Mammary epithelial cell (primary cell): ENCODE measurements at regions of chr6 and their contacts with region 1.

Region 1: DNA sequence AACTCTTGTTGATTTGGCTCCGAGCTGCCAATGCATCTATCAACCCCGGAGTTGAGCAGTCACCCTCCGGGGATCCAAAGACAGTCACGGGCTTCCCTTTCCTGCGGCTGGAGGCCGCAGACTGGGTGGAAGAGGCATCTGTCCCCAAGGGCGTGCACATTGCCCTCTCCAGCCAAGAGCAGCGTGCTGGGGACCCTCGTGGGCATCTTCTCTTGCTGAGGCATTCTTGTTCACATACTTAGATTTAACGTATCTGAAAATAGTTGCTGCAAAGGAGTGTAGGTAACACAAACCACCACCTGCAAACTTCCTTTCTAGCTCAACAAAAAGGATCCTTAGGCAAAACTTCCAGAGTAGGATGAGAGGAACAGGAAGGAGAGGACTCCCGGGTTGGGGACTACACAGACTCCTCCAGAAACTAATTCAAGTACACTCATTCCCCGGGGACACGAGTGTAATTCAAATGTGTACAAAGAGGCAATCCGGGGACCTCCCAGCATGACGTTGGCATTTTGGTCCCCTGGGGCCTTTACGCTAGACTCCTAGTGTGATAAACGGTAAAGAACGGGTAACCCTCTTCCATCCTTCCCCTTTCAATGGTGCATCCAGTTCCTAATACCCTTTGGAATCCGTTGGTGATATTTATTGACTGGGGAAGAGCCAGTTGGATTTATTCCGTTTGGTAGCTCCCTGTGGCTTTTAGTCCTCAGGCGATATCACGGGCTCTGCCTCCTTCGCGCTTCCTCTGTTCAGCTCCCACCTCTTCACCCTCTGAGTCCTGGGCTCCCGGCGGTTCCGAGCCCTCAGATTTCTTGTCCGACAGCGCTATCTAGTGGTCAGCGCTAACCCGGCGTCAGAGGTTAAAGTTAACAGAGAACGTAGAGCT is 2.7 kb upstream of the COL12A1 start:
- DNase-seq: peak; percentile 71
- H3K4me3 ChIP-seq: no peak overlapping the region
- H3K27ac ChIP-seq: no peak overlapping the region
- H3K4me1 ChIP-seq: peaks cover 9% of the 10 kb centered on the region
- H3K27me3 ChIP-seq: no peaks in the 10 kb centered on the region
- CTCF ChIP-seq: peak; percentile 86 to 90

Region 2: DNA sequence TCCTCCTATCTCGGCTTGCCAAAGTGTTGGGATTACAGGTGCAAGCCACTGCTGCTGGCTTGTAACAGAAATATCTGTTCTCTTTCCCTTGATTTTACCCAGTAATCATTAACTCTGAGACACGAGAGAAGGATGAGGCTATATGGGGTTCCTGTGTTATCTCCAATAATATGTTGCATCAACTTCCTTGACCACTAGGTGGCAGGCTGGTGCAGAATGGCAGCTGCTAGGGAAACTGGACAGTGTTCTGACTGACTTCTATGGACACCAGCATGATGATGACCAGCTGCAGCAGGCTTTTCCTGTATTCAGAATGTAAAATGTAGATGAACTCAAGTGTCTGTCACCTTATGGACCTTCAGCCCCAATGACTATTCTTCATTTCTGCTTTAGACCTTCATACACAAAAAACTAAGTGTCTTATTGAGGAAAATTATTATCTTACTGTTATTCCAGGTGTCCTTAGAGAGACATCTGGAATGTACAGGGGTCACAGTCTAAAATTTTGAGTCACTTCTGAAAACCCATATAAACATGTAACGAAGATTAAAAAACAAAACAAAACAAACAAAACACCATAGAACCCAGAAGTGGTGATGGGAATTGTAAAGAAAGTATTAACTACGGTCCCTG is 1533.0 kb before region 1 on chr6:
- CTCF ChIA-PET with region 1: no interaction called
- dilution Hi-C with region 1: no loop called
- in situ Hi-C with region 1: no loop called
- intact Hi-C with region 1: loop called (anchors 5 kb)
- DNase-seq: peak; percentile 72
- H3K4me3 ChIP-seq: no peak overlapping the region
- H3K27ac ChIP-seq: no peak overlapping the region
- H3K4me1 ChIP-seq: peaks cover 10% of the 10 kb centered on the region
- H3K27me3 ChIP-seq: no peaks in the 10 kb centered on the region
- CTCF ChIP-seq: peak; percentile 92 to 95

Region 3: DNA sequence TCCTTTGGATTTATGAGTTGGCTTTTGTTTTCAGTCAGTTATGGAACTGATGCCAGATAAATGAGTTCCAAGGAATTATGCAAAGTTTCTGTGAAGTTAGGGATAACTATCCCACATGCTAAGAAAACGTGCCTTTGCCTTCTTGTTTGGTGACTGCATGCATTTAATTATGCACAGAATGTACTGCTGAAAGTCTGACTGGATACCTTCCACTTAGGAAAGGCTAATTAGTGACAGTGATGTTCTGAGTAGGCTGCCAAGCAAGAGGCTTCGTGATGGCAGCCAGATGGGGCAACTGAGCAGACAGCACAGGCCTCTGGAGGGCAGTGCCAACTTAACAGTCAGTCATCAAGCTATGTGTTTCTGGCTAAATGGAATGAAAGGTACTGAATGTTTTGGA is 1222.7 kb before region 1 on chr6:
- CTCF ChIA-PET with region 1: interaction called, 23 read pairs
- dilution Hi-C with region 1: no loop called
- in situ Hi-C with region 1: loop called in 1 of 2 experiments (anchors 25 kb)
- intact Hi-C with region 1: loop called (anchors 1 kb)
- DNase-seq: peak; percentile 45
- H3K4me3 ChIP-seq: no peak overlapping the region
- H3K27ac ChIP-seq: no peak overlapping the region
- H3K4me1 ChIP-seq: no peaks in the 10 kb centered on the region
- H3K27me3 ChIP-seq: peaks cover 2% of the 10 kb centered on the region
- CTCF ChIP-seq: peak; percentile 58 to 91

Region 4: GRCh38 chr6:74574794-74575193 is 633.7 kb before region 1 on chr6:
- CTCF ChIA-PET with region 1: interaction called, 10 read pairs
- dilution Hi-C with region 1: no loop called
- in situ Hi-C with region 1: no loop called
- intact Hi-C with region 1: no loop called
- DNase-seq: no peak
- H3K4me3 ChIP-seq: no peak overlapping the region
- H3K27ac ChIP-seq: no peak overlapping the region
- H3K4me1 ChIP-seq: no peaks in the 10 kb centered on the region
- H3K27me3 ChIP-seq: no peaks in the 10 kb centered on the region
- CTCF ChIP-seq: peak; percentile 29 to 34

Region 5: DNA sequence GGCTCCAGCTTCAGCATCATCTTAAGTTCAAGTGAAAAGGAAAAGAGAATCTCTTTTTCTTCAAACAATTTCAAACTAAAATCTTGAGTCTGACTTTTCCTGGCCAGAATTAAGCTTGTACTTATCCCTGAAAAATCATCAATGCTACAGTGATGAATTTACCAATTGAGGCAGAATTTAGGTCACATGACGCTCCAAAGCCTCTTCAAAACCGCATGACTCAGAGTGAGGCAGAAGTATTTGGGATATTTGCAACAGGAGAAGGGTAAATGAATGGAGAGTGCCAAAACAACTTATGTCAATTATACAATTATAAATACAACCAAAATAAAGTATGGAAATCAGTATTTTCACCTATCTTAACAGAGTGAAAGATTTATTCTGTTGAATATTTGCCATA is 518.2 kb before region 1 on chr6:
- CTCF ChIA-PET with region 1: no interaction called
- dilution Hi-C with region 1: no loop called
- in situ Hi-C with region 1: no loop called
- intact Hi-C with region 1: no loop called
- DNase-seq: no peak
- H3K4me3 ChIP-seq: no peak overlapping the region
- H3K27ac ChIP-seq: no peak overlapping the region
- H3K4me1 ChIP-seq: no peaks in the 10 kb centered on the region
- H3K27me3 ChIP-seq: peaks cover 3% of the 10 kb centered on the region
- CTCF ChIP-seq: no peak

Region 6: DNA sequence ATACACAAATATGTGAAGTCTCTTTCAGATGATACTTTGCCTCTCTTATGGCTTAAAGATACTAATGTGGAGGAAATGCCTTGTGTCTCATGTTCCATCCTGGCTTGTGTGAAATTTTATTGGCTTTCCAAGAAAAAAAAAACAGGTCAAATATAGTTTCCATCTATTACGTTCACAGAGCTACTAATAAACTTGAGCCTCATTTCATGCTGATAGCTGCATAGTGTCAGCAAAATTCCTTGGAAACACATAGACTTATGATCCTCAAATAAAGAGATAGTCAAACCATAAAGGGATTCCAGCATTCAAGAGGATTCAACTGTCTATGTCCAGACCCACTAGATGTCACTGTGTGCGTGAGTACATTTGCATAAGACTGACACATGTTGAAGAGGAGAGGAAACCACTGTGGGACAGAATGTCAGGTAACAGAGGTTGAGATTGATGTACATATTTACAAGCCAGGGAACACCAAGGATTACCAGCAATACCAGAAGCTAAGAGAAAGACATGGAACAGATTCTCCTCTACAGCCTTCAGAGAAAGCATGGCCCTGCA is 269.3 kb before region 1 on chr6:
- CTCF ChIA-PET with region 1: interaction called, 3 read pairs
- dilution Hi-C with region 1: no loop called
- in situ Hi-C with region 1: no loop called
- intact Hi-C with region 1: loop called (anchors 1 kb)
- DNase-seq: peak; percentile 39
- H3K4me3 ChIP-seq: no peak overlapping the region
- H3K27ac ChIP-seq: no peak overlapping the region
- H3K4me1 ChIP-seq: peaks cover 18% of the 10 kb centered on the region
- H3K27me3 ChIP-seq: no peaks in the 10 kb centered on the region
- CTCF ChIP-seq: peak in 1 of 2 donors; percentile 41

Region 7: DNA sequence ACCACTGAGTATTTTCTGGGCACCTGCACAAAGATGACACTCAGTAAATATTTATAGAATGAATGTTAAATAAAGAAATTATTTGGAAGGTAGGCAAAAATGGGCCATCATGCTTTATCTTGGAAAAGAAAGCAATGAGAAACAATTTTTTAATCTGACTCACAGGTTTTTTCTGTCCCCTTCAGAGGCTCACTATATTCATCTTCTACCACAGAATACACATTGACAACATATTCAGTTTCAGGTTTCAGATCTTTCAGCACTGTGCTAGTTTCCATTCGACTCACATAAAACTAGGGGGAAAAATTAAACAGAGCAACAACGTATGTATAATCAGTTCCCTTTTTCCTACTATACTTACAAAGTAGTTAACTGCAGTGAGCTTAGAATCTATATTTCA is 61.0 kb before region 1 on chr6:
- CTCF ChIA-PET with region 1: no interaction called
- dilution Hi-C with region 1: no loop called
- in situ Hi-C with region 1: no loop called
- intact Hi-C with region 1: loop called (anchors 5 kb)
- DNase-seq: no peak
- H3K4me3 ChIP-seq: no peak overlapping the region
- H3K27ac ChIP-seq: no peak overlapping the region
- H3K4me1 ChIP-seq: no peaks in the 10 kb centered on the region
- H3K27me3 ChIP-seq: no peaks in the 10 kb centered on the region
- CTCF ChIP-seq: no peak

Region 8: GRCh38 chr6:75196081-75196687 is 12.4 kb before region 1 on chr6:
- CTCF ChIA-PET with region 1: no interaction called
- dilution Hi-C with region 1: no loop called
- in situ Hi-C with region 1: no loop called
- intact Hi-C with region 1: no loop called
- DNase-seq: peak; percentile 90
- H3K4me3 ChIP-seq: no peak overlapping the region
- H3K27ac ChIP-seq: peak overlapping the region; percentile 83
- H3K4me1 ChIP-seq: peaks cover 37% of the 10 kb centered on the region
- H3K27me3 ChIP-seq: no peaks in the 10 kb centered on the region
- CTCF ChIP-seq: no peak

Region 9: GRCh38 chr6:75244063-75244584 is 35.6 kb after region 1 on chr6:
- CTCF ChIA-PET with region 1: no interaction called
- dilution Hi-C with region 1: no loop called
- in situ Hi-C with region 1: no loop called
- intact Hi-C with region 1: no loop called
- DNase-seq: no peak
- H3K4me3 ChIP-seq: peak overlapping the region; percentile 77 to 98 (median 95)
- H3K27ac ChIP-seq: peak overlapping the region; percentile 84
- H3K4me1 ChIP-seq: peaks cover 6% of the 10 kb centered on the region
- H3K27me3 ChIP-seq: no peaks in the 10 kb centered on the region
- CTCF ChIP-seq: no peak

Region 10: DNA sequence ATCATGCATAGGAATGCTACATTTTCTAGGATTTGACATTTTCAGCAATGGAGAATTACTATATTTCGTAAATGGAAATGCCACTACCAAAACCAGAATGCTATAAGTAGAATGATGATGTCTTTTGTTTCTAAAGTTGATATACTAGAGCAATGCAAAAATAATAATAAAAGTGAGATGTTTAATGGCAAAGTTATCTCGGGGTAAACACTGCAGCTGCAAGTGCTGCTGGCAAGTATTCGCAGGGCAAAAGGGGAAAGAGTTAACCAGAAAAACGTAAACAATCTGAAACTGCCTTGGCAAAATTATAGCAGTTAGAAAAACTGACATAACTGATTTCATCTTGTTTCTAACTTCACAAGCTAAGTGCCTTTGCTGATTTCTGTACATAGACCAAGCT is 330.6 kb after region 1 on chr6:
- CTCF ChIA-PET with region 1: no interaction called
- dilution Hi-C with region 1: no loop called
- in situ Hi-C with region 1: no loop called
- intact Hi-C with region 1: no loop called
- DNase-seq: no peak
- H3K4me3 ChIP-seq: no peak overlapping the region
- H3K27ac ChIP-seq: no peak overlapping the region
- H3K4me1 ChIP-seq: no peaks in the 10 kb centered on the region
- H3K27me3 ChIP-seq: no peaks in the 10 kb centered on the region
- CTCF ChIP-seq: no peak